Posterior vena cava (tissue), 2 donors: ENCODE measurements at regions of chr4 and their contacts with region 1.

Region 1: GRCh38 chr4:94406668-94407437 is 44.9 kb upstream of the PDLIM5 start:
- DNase-seq: no peak

Region 2: DNA sequence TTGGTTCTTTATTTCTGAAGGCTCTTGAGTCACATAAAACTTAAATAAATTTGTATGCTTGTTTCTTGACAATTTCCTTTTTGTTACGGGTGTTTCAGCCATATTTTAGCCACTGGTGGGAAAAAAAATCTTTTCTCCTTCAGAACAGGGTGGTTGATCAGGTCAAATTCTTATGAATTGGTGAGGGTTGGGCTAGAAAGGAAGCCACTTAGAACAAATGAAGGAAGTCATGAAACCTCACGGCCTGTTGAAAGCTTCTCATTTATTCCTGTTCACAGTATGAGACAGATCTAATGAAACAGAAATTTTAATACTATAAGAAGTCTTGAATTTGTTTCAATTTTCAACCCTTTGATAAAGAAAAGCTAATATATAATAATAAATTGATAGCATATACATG is 32.8 kb after region 1 on chr4:
- intact Hi-C with region 1: no loop called
- DNase-seq: no peak

Region 3: DNA sequence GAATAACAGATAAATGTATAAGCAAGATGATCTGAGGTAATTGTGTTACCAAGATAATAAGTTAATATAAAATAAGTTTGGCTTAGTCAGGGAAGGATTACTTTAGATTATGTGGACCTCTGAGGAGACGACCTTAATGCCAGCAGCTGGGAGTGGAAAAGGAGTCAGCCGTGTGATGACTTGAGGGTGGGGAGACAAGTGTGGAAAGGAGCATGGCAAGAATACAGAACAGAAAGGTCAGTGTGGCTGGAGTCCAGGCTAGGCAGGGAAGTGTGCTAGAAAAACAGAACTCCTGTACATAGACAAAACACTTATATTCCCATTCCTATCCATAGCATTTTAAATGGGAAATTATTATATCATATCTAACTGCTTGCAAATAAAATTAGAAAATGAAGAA is 183.6 kb after region 1 on chr4:
- intact Hi-C with region 1: loop called in 1 of 2 experiments (anchors 5 kb)
- DNase-seq: no peak